Naive thymus-derived CD8-positive, alpha-beta T cell (primary cell): ENCODE measurements at regions of chr2 and their contacts with region 1.

Region 1: GRCh38 chr2:218269899-218270720 is at the starts of genes AAMP and PNKD:
- DNase-seq: peak; percentile 99 to 100 (median 100)
- ATAC-seq: peak; percentile 89 to 91
- H3K4me3 Mint-ChIP-seq: peak within 1 kb of the TSS; percentile 88 to 97 (median 94)
- H3K27ac Mint-ChIP-seq: peak within 1 kb of the TSS; percentile 83 to 98 (median 95)
- H3K4me1 Mint-ChIP-seq: peaks cover 31 to 65% (median 56%) of the 10 kb centered on the region in 4 donors
- H3K27me3 Mint-ChIP-seq: no peaks in the 10 kb centered on the region
- polyA plus RNA-seq, gene AAMP: 77.0 to 93.6 (median 89.7) TPM
- polyA plus RNA-seq, gene PNKD: 108 to 119 (median 109) TPM

Region 2: GRCh38 chr2:218194880-218195279 is 75.2 kb before region 1 on chr2:
- POLR2A ChIA-PET with region 1: no interaction called
- DNase-seq: no peak
- ATAC-seq: no peak
- H3K4me3 Mint-ChIP-seq: no peak overlapping the region
- H3K27ac Mint-ChIP-seq: no peak overlapping the region
- H3K4me1 Mint-ChIP-seq: peaks cover 0 to 3% (median 0%) of the 10 kb centered on the region in 4 donors
- H3K27me3 Mint-ChIP-seq: peaks cover 0 to 10% (median 5%) of the 10 kb centered on the region in 5 donors

Region 3: GRCh38 chr2:218216674-218217359 is 53.3 kb before region 1 on chr2 and contains the start of gene ARPC2:
- POLR2A ChIA-PET with region 1: interaction called, 17 read pairs
- DNase-seq: peak; percentile 90 to 97 (median 95)
- ATAC-seq: peak; percentile 81 to 83
- H3K4me3 Mint-ChIP-seq: peak within 1 kb of the TSS; percentile 90 to 99 (median 94)
- H3K27ac Mint-ChIP-seq: peak within 1 kb of the TSS; percentile 95 to 100 (median 97)
- H3K4me1 Mint-ChIP-seq: peaks cover 25 to 48% (median 43%) of the 10 kb centered on the region in 4 donors
- H3K27me3 Mint-ChIP-seq: no peaks in the 10 kb centered on the region
- polyA plus RNA-seq, gene ARPC2: 690 to 865 (median 728) TPM

Region 4: GRCh38 chr2:218292048-218293014 is 22.2 kb after region 1 on chr2 and contains the start of gene TMBIM1:
- POLR2A ChIA-PET with region 1: interaction called, 206 read pairs
- DNase-seq: peak; percentile 66 to 90 (median 82)
- ATAC-seq: peak; percentile 79 to 86
- H3K4me3 Mint-ChIP-seq: peak within 1 kb of the TSS; percentile 87 to 99 (median 96)
- H3K27ac Mint-ChIP-seq: peak within 1 kb of the TSS; percentile 97 to 99 (median 98)
- H3K4me1 Mint-ChIP-seq: peaks cover 27 to 64% (median 59%) of the 10 kb centered on the region in 4 donors
- H3K27me3 Mint-ChIP-seq: no peaks in the 10 kb centered on the region
- polyA plus RNA-seq, gene TMBIM1: 75.8 to 114 (median 80.3) TPM

Region 5: DNA sequence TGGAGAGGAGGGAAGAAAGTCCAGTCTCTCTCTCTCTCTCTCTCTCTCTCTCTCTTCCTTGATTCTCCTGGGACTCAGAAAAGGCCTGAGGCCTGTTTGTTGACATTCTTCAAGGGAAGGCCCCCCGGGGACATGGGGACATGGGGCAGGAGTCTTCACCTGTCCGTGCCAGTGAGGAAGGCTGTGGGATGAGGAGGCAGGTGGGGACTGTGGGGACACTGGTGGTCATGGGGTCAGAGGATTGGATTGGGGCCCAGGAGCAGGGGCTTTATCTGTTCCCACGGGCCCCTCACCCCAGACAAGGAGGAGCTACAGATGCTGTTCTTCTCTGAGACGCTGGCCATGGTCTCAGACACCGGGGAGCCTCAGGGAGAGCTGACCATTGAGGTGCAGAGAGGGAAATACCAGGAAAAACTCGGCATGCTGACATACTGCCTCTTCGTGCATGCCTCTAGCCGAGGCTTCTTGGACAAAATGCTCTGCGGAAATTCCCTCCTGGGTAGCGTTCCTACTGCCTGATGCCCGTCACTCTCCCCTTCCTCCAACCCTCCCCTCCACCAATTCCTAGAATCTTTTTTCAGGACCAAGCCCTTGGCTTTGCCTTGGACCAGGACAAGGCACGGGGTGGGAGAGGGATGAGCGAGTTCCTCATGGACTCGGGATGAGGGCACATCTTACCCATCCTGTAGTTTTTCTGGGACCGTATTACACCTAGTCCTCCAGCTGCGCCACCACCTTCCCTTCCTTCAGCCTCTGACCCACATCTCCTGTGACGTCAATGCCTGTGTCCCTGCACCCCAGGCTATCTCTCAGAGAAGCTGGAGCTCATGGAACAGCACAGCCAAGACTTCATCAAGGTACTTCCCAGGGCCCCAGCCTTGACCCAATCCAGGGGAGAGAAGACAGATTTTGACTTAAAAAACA is 87.4 kb after region 1 on chr2:
- POLR2A ChIA-PET with region 1: interaction called, 18 read pairs
- DNase-seq: peak in 1 of 10 donors; percentile 53
- ATAC-seq: no peak
- H3K4me3 Mint-ChIP-seq: no peak overlapping the region
- H3K27ac Mint-ChIP-seq: peak overlapping the region in 3 of 10 donors; percentile 22 to 63 (median 37)
- H3K4me1 Mint-ChIP-seq: peaks cover 3 to 8% (median 5%) of the 10 kb centered on the region in 4 donors
- H3K27me3 Mint-ChIP-seq: no peaks in the 10 kb centered on the region

Region 6: GRCh38 chr2:218381916-218382366 is 111.8 kb after region 1 on chr2 and contains the start of gene SLC11A1:
- POLR2A ChIA-PET with region 1: interaction called, 10 read pairs
- DNase-seq: no peak
- ATAC-seq: no peak
- H3K4me3 Mint-ChIP-seq: peak within 1 kb of the TSS in 1 of 10 donors; percentile 74
- H3K27ac Mint-ChIP-seq: peak within 1 kb of the TSS in 2 of 10 donors; percentile 31 to 47
- H3K4me1 Mint-ChIP-seq: peaks cover 4 to 13% (median 10%) of the 10 kb centered on the region in 4 donors
- H3K27me3 Mint-ChIP-seq: no peaks in the 10 kb centered on the region
- polyA plus RNA-seq, gene SLC11A1: 0.27 to 0.90 (median 0.73) TPM